HCT116 (cell line): ENCODE measurements at regions of chr4 and their contacts with region 1.

Region 1: GRCh38 chr4:88792268-88792781 is 94.7 kb upstream of the NAP1L5 start:
- DNase-seq: no peak
- ATAC-seq: no peak
- H3K4me3 ChIP-seq: no peak overlapping the region
- H3K27ac ChIP-seq: no peak overlapping the region
- H3K4me1 ChIP-seq: peaks cover 0 to 4% of the 10 kb centered on the region in 2 experiments; a peak in 1 of 4 replicates
- H3K27me3 ChIP-seq: no peaks in the 10 kb centered on the region
- CTCF ChIP-seq: no peak
- POLR2A ChIP-seq: no peak
- RAD21 ChIP-seq: no peak

Region 2: GRCh38 chr4:88533937-88534750 is 258.2 kb before region 1 on chr4:
- CTCF ChIA-PET with region 1: interaction called, 10 read pairs
- POLR2A ChIA-PET with region 1: no interaction called
- RAD21 ChIA-PET with region 1: interaction called, 3 to 4 read pairs
- intact Hi-C with region 1: loop called (anchors 1 kb)
- DNase-seq: no peak
- ATAC-seq: no peak
- H3K4me3 ChIP-seq: no peak overlapping the region
- H3K27ac ChIP-seq: no peak overlapping the region
- H3K4me1 ChIP-seq: no peaks in the 10 kb centered on the region
- H3K27me3 ChIP-seq: no peaks in the 10 kb centered on the region
- CTCF ChIP-seq: no peak
- POLR2A ChIP-seq: no peak
- RAD21 ChIP-seq: no peak

Region 3: GRCh38 chr4:88706574-88706973 is 85.8 kb before region 1 on chr4:
- CTCF ChIA-PET with region 1: interaction called, 4 read pairs
- POLR2A ChIA-PET with region 1: no interaction called
- RAD21 ChIA-PET with region 1: no interaction called
- intact Hi-C with region 1: loop called (anchors 2 kb)
- DNase-seq: no peak
- ATAC-seq: peak; percentile 52; the same call in 1 of the 2 replicates
- H3K4me3 ChIP-seq: no peak overlapping the region
- H3K27ac ChIP-seq: no peak overlapping the region
- H3K4me1 ChIP-seq: no peaks in the 10 kb centered on the region
- H3K27me3 ChIP-seq: no peaks in the 10 kb centered on the region
- CTCF ChIP-seq: peak in 2 of 3 experiments; percentile 24 to 48; a peak in 3 of 6 replicates
- POLR2A ChIP-seq: no peak
- RAD21 ChIP-seq: peak; percentile 48